Activated CD8-positive, alpha-beta T cell treated with anti-CD3 and anti-CD28 coated beads, Interleukin-2, amount 10 ng/mL, durations not matched to agents 7 days and 5 days (primary cell): ENCODE measurements at regions of chr6 and their contacts with region 1.

Region 1: DNA sequence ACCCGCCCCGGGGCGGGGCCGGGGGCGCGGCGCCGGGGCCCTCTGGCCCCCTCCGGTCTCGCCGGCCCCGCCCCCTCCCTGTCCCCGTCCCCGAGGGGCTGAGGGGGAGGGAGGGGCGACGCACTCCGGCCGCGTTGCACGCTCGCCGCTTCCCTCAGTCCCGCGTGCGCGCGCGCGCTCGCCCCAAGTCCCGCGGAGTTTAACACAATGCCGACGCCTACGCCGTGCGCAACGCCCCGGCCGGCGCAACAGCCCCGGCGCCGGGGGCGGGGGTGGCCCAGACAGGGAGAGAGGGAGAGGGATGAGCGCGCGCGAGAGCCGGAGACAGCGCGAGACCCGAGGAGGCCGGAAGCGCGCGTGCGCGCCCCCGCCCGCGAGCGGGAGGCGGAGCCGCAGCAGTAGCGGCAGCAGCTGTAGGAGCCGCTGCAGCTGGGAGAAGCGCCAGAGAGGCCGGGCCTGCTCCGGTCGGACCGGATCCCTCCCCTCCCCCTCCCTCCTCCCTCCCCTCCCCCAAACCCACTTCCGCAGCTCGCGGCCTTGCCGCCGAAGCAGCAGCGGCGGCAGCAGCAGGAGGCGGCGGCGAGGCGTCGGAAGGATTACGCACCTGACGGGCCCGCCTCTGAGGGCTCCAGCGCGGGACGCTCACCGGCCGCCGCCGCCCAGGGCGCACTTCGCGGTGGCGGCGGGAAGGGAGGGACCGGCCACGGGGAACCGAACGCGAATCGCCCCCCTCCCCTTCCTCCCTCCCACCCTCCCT is 905 bp downstream of the ZBTB2 start:
- DNase-seq: peak; percentile 98
- ATAC-seq: peak; percentile 87
- H3K4me3 Mint-ChIP-seq: peak overlapping the region; percentile 64
- H3K27ac Mint-ChIP-seq: peak overlapping the region; percentile 80
- H3K4me1 Mint-ChIP-seq: peaks cover 55% of the 10 kb centered on the region
- H3K27me3 Mint-ChIP-seq: no peaks in the 10 kb centered on the region

Region 2: DNA sequence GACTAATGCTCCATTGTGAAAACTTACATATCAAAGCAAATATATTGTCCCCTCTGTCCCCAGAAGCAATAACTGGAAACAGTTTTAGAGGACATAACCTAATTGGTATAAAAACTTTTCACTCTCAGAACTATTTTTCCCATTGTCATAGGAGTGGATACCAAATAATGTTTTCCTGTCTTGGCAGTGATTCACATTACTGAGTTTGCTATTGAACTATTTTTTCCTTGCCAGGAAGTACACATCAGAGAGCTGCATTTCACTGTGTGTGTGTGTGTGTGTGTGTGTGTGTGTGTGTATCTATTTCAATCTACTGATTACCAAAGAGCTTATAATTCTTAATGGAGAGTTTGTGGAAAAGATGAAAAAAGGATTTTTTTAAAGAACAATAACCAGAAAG is 105.3 kb before region 1 on chr6:
- CTCF ChIA-PET with region 1: no interaction called
- POLR2A ChIA-PET with region 1: no interaction called
- DNase-seq: no peak
- ATAC-seq: no peak
- H3K4me3 Mint-ChIP-seq: no peak overlapping the region
- H3K27ac Mint-ChIP-seq: no peak overlapping the region
- H3K4me1 Mint-ChIP-seq: peaks cover 18% of the 10 kb centered on the region
- H3K27me3 Mint-ChIP-seq: peaks cover 41% of the 10 kb centered on the region

Region 3: DNA sequence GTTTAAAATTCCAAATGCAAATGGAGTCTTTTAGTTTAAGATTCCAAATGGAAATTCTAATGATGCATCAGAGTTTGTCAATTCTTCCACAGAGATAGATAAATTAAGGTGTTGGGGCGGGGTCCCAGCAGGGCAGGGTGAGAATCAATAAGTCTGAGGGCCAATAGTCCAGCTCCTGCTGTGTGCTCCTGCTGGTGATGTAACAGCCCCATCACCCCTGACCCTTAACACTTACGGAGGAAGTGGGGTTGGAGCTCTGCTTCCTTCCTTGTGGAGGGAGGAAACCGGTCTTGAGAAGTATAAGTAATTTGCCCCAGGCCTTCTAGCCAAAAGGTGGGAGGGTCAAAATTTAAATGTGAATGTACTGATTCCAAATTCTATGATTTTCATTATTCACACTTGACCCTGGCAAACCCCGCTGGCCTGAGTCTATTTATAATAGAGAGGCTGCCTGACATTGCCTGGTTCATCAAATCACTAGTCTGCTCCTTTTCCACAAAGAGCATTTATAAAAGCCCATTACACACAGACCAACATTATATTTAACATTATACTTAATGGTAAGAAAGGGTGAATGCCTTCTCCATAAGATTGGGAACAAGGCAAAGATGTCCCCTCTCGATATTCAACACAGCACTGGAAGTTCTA is 16.3 kb before region 1 on chr6:
- CTCF ChIA-PET with region 1: interaction called, 19 read pairs
- POLR2A ChIA-PET with region 1: interaction called, 45 read pairs
- DNase-seq: peak; percentile 40
- ATAC-seq: peak; percentile 54
- H3K4me3 Mint-ChIP-seq: peak overlapping the region; percentile 66
- H3K27ac Mint-ChIP-seq: peak overlapping the region; percentile 93
- H3K4me1 Mint-ChIP-seq: peaks cover 70% of the 10 kb centered on the region
- H3K27me3 Mint-ChIP-seq: no peaks in the 10 kb centered on the region

Region 4: DNA sequence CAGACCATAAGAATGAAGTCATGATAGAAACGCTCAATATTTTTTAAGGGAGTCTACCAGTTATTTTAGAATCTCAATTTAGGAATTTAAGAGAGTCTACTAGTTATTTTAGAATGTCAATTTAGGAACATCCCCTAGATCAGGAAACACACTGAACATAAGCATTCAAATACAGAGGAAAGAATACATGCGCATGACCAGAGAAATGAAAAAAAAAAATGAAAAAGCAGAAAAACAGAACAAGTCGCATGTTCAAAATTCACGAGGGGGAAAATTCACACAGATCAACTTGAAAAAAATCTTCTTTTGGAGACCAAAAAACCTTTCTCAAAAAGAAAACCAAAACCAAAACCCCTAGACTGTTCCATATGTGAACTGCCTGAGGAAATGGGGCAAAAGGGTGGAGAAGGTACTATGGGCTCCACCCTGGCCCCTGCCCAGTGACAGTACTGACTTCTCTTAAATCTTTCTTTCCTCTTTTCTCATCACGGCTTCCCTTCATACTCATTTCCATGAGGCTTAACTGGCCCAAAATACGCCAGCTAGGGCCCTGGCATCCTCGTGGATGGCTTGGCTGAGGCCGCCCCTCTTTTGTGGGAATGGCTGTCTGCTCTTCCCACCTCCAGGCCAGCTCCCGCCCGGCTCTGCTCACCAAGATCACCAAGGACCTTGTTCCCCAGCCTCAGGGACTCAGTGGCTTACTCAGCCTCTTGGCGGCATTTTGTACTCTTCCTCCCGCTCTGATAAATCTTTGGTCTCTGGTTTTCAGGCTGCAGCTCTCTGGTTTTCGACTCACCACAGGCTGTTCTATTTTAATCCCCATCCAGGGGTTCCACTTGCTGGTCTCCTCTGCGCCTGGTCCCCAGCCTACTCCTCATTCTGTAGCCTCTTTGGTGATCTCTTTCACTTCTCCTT is 10.3 kb before region 1 on chr6:
- CTCF ChIA-PET with region 1: interaction called, 9 read pairs
- POLR2A ChIA-PET with region 1: interaction called, 35 read pairs
- DNase-seq: peak; percentile 50
- ATAC-seq: peak; percentile 88
- H3K4me3 Mint-ChIP-seq: peak overlapping the region; percentile 79
- H3K27ac Mint-ChIP-seq: peak overlapping the region; percentile 92
- H3K4me1 Mint-ChIP-seq: peaks cover 72% of the 10 kb centered on the region
- H3K27me3 Mint-ChIP-seq: no peaks in the 10 kb centered on the region

Region 5: DNA sequence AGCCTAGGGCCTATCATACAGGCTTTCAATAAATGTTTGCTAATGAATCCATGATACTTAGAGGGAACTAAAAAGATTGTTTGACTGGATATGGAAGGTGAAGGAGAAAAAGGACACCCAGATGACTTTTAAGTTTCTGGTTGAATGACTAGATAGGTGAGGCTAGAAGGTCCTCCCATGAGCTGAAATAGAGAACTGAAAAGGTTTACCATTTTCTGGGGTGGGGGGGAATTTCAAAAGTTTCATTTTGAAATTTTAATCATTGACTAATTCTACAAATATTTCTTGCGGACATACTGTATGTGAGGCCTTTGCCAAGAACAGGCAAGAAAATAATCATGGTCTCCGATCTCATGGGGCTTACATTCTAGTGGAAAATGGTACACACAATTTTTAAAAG is 18.8 kb after region 1 on chr6:
- CTCF ChIA-PET with region 1: interaction called, 31 read pairs
- POLR2A ChIA-PET with region 1: interaction called, 4 read pairs
- DNase-seq: no peak
- ATAC-seq: no peak
- H3K4me3 Mint-ChIP-seq: no peak overlapping the region
- H3K27ac Mint-ChIP-seq: no peak overlapping the region
- H3K4me1 Mint-ChIP-seq: peaks cover 25% of the 10 kb centered on the region
- H3K27me3 Mint-ChIP-seq: no peaks in the 10 kb centered on the region

Region 6: DNA sequence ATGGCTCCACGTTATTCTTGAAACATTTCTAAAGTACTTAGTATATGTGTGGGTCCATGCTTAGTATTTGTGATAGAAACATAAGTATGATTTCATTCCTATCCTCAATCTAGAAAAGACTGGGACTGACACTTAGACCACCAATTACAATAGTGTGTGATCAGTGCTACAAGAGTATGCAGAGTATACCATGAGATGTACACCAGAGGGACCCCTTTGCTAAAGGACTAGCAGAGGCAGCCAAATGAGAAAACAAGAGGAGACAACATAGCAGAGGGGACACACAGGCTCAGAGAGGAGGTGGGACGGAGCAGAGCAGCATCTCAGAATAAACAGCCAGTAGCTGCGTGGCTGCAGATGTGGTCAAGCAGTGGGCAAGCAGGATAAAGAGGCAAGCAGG is 40.4 kb after region 1 on chr6:
- CTCF ChIA-PET with region 1: no interaction called
- POLR2A ChIA-PET with region 1: no interaction called
- DNase-seq: no peak
- ATAC-seq: peak; percentile 47
- H3K4me3 Mint-ChIP-seq: no peak overlapping the region
- H3K27ac Mint-ChIP-seq: no peak overlapping the region
- H3K4me1 Mint-ChIP-seq: no peaks in the 10 kb centered on the region
- H3K27me3 Mint-ChIP-seq: no peaks in the 10 kb centered on the region

Region 7: DNA sequence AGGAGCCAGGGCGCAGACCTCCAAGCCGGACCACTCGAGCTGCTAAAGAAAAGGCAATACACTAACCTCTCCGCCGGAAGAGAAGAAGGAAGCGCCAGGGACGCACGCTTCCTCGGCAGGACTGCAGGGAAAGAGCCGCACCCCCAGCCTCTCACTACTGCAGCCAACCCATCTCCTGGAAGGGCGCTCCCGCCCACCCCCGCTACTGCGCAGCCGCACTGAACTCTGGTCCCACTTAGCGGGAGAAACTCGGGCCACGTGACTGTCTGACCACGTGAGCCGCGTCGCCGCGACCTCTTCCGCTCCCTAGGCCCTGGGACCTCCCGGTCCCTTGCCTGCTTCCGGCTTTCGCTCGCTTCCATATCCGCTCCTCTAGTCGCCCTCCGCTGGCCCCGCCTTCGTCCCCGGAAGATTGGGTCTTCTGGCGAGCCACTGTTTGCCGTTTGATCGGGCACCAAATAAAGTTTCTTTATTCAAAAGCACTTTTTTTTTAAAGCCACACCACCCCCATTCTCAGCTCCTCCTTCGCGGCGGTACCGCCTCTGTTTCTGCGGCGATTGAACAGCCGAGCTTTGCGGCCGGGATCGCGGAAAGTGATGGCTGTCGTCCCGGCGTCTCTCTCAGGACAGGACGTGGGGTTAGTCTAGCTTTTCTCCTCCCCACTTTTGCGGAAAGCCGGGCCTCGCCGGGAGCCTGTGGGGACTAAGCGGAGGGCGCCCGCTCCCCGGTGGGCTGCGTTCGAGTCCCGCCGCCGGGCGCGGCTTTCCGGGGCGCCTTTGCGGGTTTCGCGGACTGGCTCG is 61.7 kb after region 1 on chr6 and contains the start of gene RMND1:
- CTCF ChIA-PET with region 1: interaction called, 4 read pairs
- POLR2A ChIA-PET with region 1: interaction called, 13 read pairs
- DNase-seq: peak; percentile 100
- ATAC-seq: peak; percentile 98
- H3K4me3 Mint-ChIP-seq: peak within 1 kb of the TSS; percentile 99
- H3K27ac Mint-ChIP-seq: peak within 1 kb of the TSS; percentile 94
- H3K4me1 Mint-ChIP-seq: peaks cover 26% of the 10 kb centered on the region
- H3K27me3 Mint-ChIP-seq: no peaks in the 10 kb centered on the region
- total RNA-seq, gene RMND1: 18.6 to 19.2 TPM